Naive thymus-derived CD4-positive, alpha-beta T cell (primary cell): ENCODE measurements at regions of chr19 and their contacts with region 1.

Region 1: GRCh38 chr19:1269065-1269477 is at the start of gene CIRBP:
- DNase-seq: peak; percentile 95 to 99 (median 98)
- ATAC-seq: peak; percentile 90
- H3K4me3 ChIP-seq: peak within 1 kb of the TSS; percentile 76
- H3K4me3 Mint-ChIP-seq: peak within 1 kb of the TSS; percentile 88 to 96 (median 90)
- H3K27ac ChIP-seq: peak within 1 kb of the TSS; percentile 82
- H3K27ac Mint-ChIP-seq: peak within 1 kb of the TSS; percentile 87 to 94 (median 91)
- H3K4me1 ChIP-seq: peaks cover 60 to 61% of the 10 kb centered on the region in 2 donors
- H3K4me1 Mint-ChIP-seq: peaks cover 52 to 76% (median 62%) of the 10 kb centered on the region in 7 donors
- H3K27me3 ChIP-seq: no peaks in the 10 kb centered on the region
- H3K27me3 Mint-ChIP-seq: peaks cover 0 to 6% (median 0%) of the 10 kb centered on the region in 5 donors
- total RNA-seq, gene CIRBP: 237 to 629 (median 524) TPM

Region 2: DNA sequence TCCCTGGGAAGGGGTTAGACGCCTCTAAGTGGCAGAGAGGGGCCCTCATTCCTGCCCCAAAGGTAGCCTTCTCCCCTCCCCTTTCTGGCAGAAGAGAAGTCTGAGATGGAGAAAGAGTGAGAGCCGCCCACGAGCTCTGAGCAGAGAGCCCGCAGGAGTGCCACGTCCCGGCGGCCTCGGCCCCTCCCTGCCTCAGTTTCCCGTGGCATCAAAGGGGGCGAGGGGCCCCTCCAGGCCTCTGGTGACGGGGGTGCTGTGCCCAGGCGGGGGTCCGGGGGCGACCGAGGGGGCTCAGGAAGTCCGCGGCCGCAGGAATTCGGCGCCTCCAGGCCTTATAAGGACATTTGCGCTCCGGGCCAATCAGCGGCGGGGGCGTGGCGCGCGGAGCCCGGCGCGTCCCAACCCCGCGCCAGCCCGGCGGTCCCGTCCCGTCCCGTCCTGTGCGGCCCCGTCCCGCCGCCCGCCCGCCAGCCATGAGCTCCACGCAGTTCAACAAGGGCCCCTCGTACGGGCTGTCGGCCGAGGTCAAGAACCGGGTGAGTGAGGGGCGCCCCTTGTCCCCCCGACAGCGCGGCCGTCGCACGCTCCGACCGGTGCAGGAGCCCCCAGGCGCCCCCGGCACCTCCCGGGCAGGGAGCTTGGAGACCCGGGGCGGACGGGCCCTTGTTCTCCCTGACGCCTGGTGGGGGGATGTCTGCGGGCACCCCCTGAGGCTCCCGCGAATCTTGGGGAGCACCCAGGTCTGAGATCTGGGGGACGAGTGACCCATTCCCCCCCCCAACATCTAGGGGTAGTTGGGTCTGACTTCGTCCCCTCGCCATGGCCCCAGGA is 242.7 kb before region 1 on chr19 and contains the start of gene CNN2:
- CTCF ChIA-PET with region 1: no interaction called
- POLR2A ChIA-PET with region 1: interaction called, 14 read pairs
- intact Hi-C with region 1: loop called in 1 of 2 experiments (anchors 2 kb)
- DNase-seq: peak in 8 of 9 donors; percentile 49 to 85 (median 58)
- ATAC-seq: peak; percentile 49
- H3K4me3 ChIP-seq: peak within 1 kb of the TSS; percentile 99
- H3K4me3 Mint-ChIP-seq: peak within 1 kb of the TSS; percentile 93 to 99 (median 97)
- H3K27ac ChIP-seq: peak within 1 kb of the TSS; percentile 85
- H3K27ac Mint-ChIP-seq: peak within 1 kb of the TSS; percentile 88 to 98 (median 94)
- H3K4me1 ChIP-seq: peaks cover 21 to 31% of the 10 kb centered on the region in 2 donors
- H3K4me1 Mint-ChIP-seq: peaks cover 0 to 40% (median 26%) of the 10 kb centered on the region in 7 donors
- H3K27me3 ChIP-seq: no peaks in the 10 kb centered on the region
- H3K27me3 Mint-ChIP-seq: peaks cover 0 to 5% (median 0%) of the 10 kb centered on the region in 5 donors
- total RNA-seq, gene CNN2: 234 to 440 (median 240) TPM

Region 3: DNA sequence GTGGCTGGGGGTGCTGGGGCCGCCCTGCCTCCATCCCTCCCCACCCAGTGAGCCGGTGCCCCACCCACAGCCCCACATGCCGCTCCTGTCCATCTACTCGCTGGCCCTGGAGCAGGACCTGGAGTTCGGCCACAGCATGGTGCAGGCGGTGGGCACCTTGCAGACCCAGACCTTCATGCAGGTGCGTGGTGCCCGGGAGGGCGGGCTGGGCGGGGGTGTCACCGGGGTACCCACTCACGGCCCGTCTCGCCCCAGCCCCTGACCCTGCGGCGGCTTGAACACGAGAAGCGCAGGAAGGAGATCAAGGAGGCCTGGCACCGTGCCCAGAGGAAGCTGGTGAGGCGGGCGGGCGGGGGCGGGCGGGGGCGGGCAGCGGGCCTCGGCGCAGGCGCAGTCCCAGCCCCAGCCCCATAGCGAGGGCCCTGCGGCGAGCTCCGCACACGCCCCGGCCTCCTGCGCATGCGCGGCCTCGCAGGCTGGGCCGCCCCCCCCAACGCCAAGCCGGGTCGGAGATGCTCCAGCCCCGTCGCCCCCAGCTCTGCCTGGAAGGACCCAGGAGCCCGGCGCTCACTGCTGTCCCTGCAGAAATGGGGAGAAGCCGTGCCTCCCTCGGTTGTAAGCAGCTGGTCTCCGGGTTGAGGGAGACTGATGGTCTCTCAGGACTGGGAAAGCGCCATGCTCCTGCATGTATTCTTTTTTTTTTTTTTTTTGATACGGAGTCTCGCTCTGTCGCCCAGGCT is 194.4 kb before region 1 on chr19:
- CTCF ChIA-PET with region 1: no interaction called
- POLR2A ChIA-PET with region 1: interaction called, 14 read pairs
- intact Hi-C with region 1: no loop called
- DNase-seq: peak; percentile 81 to 95 (median 93)
- ATAC-seq: peak; percentile 61
- H3K4me3 ChIP-seq: peak overlapping the region; percentile 68
- H3K4me3 Mint-ChIP-seq: peak overlapping the region; percentile 80 to 97 (median 89)
- H3K27ac ChIP-seq: peak overlapping the region; percentile 92
- H3K27ac Mint-ChIP-seq: peak overlapping the region; percentile 91 to 100 (median 99)
- H3K4me1 ChIP-seq: peaks cover 67 to 72% of the 10 kb centered on the region in 2 donors
- H3K4me1 Mint-ChIP-seq: peaks cover 27 to 53% (median 43%) of the 10 kb centered on the region in 7 donors
- H3K27me3 ChIP-seq: no peaks in the 10 kb centered on the region
- H3K27me3 Mint-ChIP-seq: no peaks in the 10 kb centered on the region

Region 4: GRCh38 chr19:1131738-1132551 is 137.1 kb before region 1 on chr19:
- CTCF ChIA-PET with region 1: no interaction called
- POLR2A ChIA-PET with region 1: interaction called, 18 read pairs
- intact Hi-C with region 1: no loop called
- DNase-seq: peak; percentile 69 to 87 (median 85)
- ATAC-seq: peak; percentile 80
- H3K4me3 ChIP-seq: peak overlapping the region; percentile 81
- H3K4me3 Mint-ChIP-seq: peak overlapping the region; percentile 78 to 94 (median 85)
- H3K27ac ChIP-seq: peak overlapping the region; percentile 98
- H3K27ac Mint-ChIP-seq: peak overlapping the region; percentile 88 to 93 (median 92)
- H3K4me1 ChIP-seq: peaks cover 23 to 42% of the 10 kb centered on the region in 2 donors
- H3K4me1 Mint-ChIP-seq: peaks cover 13 to 45% (median 29%) of the 10 kb centered on the region in 7 donors
- H3K27me3 ChIP-seq: no peaks in the 10 kb centered on the region
- H3K27me3 Mint-ChIP-seq: no peaks in the 10 kb centered on the region

Region 5: GRCh38 chr19:1205114-1206062 is 63.7 kb before region 1 on chr19 and contains the start of gene STK11:
- CTCF ChIA-PET with region 1: no interaction called
- POLR2A ChIA-PET with region 1: interaction called, 3 read pairs
- intact Hi-C with region 1: loop called (anchors 1 kb)
- DNase-seq: peak; percentile 98 to 100 (median 99)
- ATAC-seq: peak; percentile 97
- H3K4me3 ChIP-seq: peak within 1 kb of the TSS; percentile 81
- H3K4me3 Mint-ChIP-seq: peak within 1 kb of the TSS; percentile 92 to 98 (median 94)
- H3K27ac ChIP-seq: peak within 1 kb of the TSS; percentile 74
- H3K27ac Mint-ChIP-seq: peak within 1 kb of the TSS; percentile 85 to 94 (median 88)
- H3K4me1 ChIP-seq: peaks cover 27 to 34% of the 10 kb centered on the region in 2 donors
- H3K4me1 Mint-ChIP-seq: peaks cover 15 to 45% (median 29%) of the 10 kb centered on the region in 7 donors
- H3K27me3 ChIP-seq: no peaks in the 10 kb centered on the region
- H3K27me3 Mint-ChIP-seq: no peaks in the 10 kb centered on the region
- total RNA-seq, gene STK11: 67.7 to 91.3 (median 71.6) TPM

Region 6: DNA sequence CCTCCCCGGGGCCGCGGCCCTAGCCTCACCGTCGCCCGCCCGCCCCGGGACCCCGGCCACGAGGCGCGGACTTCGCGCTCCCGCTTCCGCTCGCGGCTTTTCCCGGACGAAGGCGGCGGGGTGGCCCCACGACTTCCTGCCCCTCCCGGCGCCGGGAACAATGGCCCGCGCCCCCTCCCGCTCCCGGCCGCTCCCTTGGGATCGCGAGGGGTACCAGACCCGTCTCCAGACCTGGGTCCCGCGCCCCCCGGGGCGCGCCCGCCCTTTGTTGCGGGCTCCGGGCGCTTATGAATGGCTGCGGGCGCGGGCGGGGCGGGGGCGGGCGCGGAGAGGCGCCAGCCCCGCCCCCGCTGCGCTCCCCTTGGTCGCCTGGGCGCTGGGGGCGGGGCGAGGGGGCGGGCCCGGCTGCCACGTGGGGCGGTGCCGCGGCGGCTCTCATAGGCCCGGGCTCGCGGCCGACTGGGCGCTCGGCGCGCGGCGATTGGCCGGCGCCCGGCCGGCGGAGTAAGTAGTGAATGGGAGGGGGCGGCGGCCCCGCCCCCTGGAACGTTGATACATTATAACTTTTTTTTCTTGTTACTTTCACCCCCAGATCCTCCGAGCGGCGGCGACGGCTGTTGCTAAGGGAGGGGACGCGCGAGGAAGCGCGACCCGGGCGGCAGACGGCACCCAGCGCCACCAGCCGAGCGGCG is 19.6 kb before region 1 on chr19:
- CTCF ChIA-PET with region 1: interaction called, 164 read pairs
- POLR2A ChIA-PET with region 1: interaction called, 366 read pairs
- intact Hi-C with region 1: loop called (anchors 1 kb)
- DNase-seq: peak; percentile 88 to 97 (median 94)
- ATAC-seq: peak; percentile 74
- H3K4me3 ChIP-seq: peak overlapping the region; percentile 63
- H3K4me3 Mint-ChIP-seq: peak overlapping the region; percentile 80 to 95 (median 88)
- H3K27ac ChIP-seq: peak overlapping the region; percentile 94
- H3K27ac Mint-ChIP-seq: peak overlapping the region; percentile 62 to 95 (median 89)
- H3K4me1 ChIP-seq: peaks cover 22 to 27% of the 10 kb centered on the region in 2 donors
- H3K4me1 Mint-ChIP-seq: peaks cover 0 to 11% (median 10%) of the 10 kb centered on the region in 7 donors
- H3K27me3 ChIP-seq: no peaks in the 10 kb centered on the region
- H3K27me3 Mint-ChIP-seq: no peaks in the 10 kb centered on the region